ENCODE measurements at regions of chr3 and their contacts with region 1.

Region 1: GRCh38 chr3:186200726-186201125 is 91.8 kb upstream of the ETV5 start:
- DNase-seq: peak; percentile 66 to 97 (median 79)

Region 2: GRCh38 chr3:186097663-186098451 is 102.9 kb before region 1 on chr3:
- intact Hi-C with region 1: loop called (anchors 5 kb)
- DNase-seq: peak; percentile 66 to 96 (median 82)

Measured in posterior cingulate gyrus (tissue), 11 donors.